ENCODE measurements at regions of chr7 and their contacts with region 1.

Region 1: DNA sequence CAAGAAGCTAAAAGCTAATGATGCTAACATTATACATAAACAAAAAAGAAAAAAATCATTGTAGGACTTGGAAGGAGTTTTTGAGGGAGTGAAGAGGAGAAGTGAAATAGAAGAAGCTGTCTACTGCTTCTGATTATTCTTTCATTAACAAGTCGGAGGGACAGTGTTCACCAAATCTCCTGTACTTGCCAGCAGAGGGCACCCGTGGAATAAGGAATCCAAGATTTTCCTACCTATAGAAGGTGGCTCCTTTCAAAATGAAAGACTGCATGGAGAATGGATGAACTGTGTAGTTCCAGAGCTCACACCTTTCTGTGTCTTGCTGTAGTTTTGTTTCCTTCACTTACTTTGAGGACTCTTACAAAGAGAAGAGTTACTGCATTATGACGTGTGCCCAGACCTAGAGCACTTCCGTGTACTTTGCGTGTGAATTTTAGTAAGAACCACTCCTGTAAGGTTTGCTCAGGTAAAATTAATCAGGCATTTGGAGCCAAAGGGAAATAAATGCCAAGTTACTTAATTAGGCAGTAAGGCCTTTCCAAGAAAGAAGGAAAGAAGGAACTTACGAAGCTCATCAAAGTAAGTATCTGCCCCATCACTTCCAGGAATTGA is 145.1 kb downstream of the SEMA3D start:
- DNase-seq: peak in 1 of 2 donors; percentile 17
- ATAC-seq: no peak
- H3K4me3 ChIP-seq: no peak overlapping the region
- H3K27ac ChIP-seq: no peak overlapping the region
- H3K4me1 ChIP-seq: no peaks in the 10 kb centered on the region
- H3K27me3 ChIP-seq: no peaks in the 10 kb centered on the region
- CTCF ChIP-seq: peak in 4 of 5 experiments; percentile 6 to 44 (median 38)
- POLR2A ChIP-seq: no peak

Region 2: DNA sequence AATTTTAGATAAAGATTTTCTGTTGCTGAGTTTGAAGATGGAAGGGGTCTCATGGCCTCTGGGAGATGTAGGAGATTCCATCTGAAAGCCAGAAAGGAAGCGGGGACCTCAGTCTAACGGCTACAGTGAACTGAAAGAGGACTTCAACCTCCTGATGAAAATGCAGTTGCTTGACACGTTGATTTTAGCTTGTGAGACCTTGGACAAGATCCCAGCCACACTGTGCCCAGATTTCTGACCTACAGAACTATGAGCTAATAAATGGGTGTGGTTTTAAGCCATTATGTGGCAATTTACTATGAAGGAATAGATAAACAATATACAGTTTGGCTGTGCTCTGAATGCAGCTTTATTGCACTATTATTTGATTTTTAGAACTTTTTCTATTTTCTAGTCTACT is 487.5 kb after region 1 on chr7:
- in situ Hi-C with region 1: loop called in 1 of 4 experiments (anchors 25 kb)
- intact Hi-C with region 1: no loop called
- DNase-seq: no peak
- ATAC-seq: no peak
- H3K4me3 ChIP-seq: no peak overlapping the region
- H3K27ac ChIP-seq: no peak overlapping the region
- H3K4me1 ChIP-seq: no peaks in the 10 kb centered on the region
- H3K27me3 ChIP-seq: no peaks in the 10 kb centered on the region
- CTCF ChIP-seq: no peak
- POLR2A ChIP-seq: no peak

Region 3: DNA sequence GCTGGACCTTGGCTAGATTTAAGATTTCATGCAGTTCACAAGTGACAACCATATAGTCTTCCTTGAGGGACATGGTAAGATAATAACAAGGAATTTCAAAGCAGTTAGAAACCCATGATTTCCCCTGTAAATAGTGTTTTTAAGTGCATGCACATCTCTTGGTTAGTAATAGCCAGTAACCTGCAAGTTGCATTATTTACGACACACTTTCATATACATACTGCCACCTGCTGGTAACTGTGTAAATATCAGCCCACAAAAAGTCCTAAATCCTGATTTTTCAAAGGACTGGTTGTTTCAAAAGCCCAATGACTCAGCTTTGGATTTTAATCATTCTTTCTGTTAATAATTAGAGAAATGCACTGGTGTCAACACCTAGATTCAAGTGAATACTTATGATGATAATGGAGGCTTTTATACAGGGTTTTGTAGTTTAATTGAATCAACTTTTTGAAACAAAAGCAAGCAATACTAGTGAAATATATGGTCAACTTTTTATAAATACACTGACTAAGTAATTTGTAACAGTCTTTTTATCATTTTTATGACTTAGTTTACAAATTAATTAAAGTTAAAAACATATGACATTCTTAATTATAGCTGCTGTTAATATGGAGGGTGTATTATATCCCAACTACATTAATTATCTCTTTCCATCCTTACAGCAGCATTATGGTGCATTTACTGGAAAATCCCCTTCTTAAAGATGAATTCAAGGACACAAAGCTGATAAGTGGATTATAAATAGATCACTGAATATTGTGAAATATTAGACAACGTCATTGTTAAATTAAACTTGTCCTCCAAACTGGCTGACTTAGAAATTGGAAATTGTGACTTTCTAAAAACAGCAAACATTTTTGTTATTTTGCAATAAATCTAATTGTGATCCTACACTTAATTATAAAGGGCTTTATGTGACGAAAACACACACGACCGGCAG is 512.8 kb after region 1 on chr7:
- in situ Hi-C with region 1: loop called (anchors 10 to 25 kb)
- intact Hi-C with region 1: no loop called
- DNase-seq: no peak
- ATAC-seq: no peak
- H3K4me3 ChIP-seq: no peak overlapping the region
- H3K27ac ChIP-seq: no peak overlapping the region
- H3K4me1 ChIP-seq: no peaks in the 10 kb centered on the region
- H3K27me3 ChIP-seq: no peaks in the 10 kb centered on the region
- CTCF ChIP-seq: peak; percentile 13 to 56 (median 35)
- POLR2A ChIP-seq: no peak

Measured in gastrocnemius medialis (tissue), 4 donors.